Posterior vena cava (tissue), 2 donors: ENCODE measurements at regions of chr5 and their contacts with region 1.

Region 1: GRCh38 chr5:166127766-166128565 is 2163.5 kb upstream of the WWC1 start:
- DNase-seq: peak; percentile 72

Region 2: DNA sequence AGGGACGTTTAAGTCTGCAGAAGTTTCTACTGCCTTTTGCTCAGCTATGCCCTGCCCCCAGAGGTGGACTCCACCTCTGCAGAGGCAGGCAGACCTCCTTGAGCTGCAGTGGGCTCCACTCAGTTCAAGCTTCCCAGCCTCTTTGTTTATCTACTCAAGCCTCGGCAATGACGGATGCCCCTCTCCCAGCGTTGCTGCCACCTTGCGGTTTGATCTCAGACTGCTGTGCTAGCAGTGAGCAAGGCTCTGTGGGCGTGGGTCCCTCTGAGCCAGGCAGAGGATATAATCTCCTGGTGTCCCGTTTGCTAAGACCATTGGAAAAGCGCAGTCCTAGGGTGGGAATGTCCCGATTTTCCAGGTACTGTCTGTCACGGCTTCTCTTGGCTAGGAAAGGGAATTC is 25.0 kb before region 1 on chr5:
- intact Hi-C with region 1: no loop called
- DNase-seq: no peak

Region 3: GRCh38 chr5:166493612-166494011 is 365.6 kb after region 1 on chr5:
- intact Hi-C with region 1: no loop called
- DNase-seq: no peak

Region 4: GRCh38 chr5:166926138-166926537 is 798.2 kb after region 1 on chr5:
- intact Hi-C with region 1: loop called in 1 of 2 experiments (anchors 5 kb)
- DNase-seq: no peak